Activated CD4-positive, alpha-beta T cell treated with anti-CD3 and anti-CD28 coated beads for 36 hours (primary cell): ENCODE measurements at regions of chr2 and their contacts with region 1.

Region 1: GRCh38 chr2:196171248-196171871 is at the start of gene STK17B:
- DNase-seq: peak; percentile 99
- ATAC-seq: peak; percentile 76
- H3K4me3 Mint-ChIP-seq: peak within 1 kb of the TSS; percentile 92
- H3K27ac Mint-ChIP-seq: peak within 1 kb of the TSS; percentile 98
- H3K4me1 Mint-ChIP-seq: peaks cover 38% of the 10 kb centered on the region
- H3K27me3 Mint-ChIP-seq: no peaks in the 10 kb centered on the region
- total RNA-seq, gene STK17B: 159 to 178 TPM

Region 2: GRCh38 chr2:195533771-195534642 is 637.4 kb before region 1 on chr2:
- CTCF ChIA-PET with region 1: no interaction called
- POLR2A ChIA-PET with region 1: no interaction called
- intact Hi-C with region 1: loop called (anchors 10 kb)
- DNase-seq: peak; percentile 86
- ATAC-seq: peak; percentile 75
- H3K4me3 Mint-ChIP-seq: peak overlapping the region; percentile 78
- H3K27ac Mint-ChIP-seq: peak overlapping the region; percentile 100
- H3K4me1 Mint-ChIP-seq: peaks cover 82% of the 10 kb centered on the region
- H3K27me3 Mint-ChIP-seq: no peaks in the 10 kb centered on the region

Region 3: DNA sequence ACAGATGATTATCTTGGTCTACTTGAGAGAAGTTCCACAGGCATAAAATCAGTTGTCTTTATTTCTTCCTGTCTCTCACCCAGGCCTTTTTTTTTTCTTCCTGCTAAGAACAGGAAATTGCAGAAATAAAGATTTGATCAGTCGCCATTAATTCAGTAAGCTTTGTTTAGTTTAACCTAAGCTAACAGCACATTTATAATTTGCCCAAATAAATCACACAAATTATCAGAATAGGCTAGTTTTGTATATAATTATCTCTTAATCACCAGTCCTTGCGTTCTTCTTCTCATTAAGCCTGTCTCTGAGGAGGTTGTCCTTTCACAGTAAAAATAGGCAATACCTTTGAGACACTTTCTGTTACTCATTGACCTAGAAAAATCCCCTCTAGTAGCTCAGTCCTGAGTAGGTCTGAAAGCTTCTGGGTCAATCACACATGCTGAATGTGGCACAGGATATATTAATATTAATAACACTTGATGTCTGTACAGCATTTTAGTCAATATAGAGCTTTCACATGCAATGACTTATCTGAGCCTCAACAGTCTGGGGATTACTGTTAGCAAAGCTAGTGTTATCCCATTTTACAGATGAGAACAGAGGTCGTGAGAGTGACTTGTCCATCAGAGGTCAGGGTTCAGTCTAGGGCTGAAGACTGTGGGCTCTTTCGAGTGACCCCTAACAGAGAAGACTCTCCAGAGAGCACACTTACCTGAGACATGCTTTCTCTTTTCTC is 11.2 kb after region 1 on chr2:
- CTCF ChIA-PET with region 1: interaction called, 5 read pairs
- POLR2A ChIA-PET with region 1: interaction called, 10 read pairs
- intact Hi-C with region 1: no loop called
- DNase-seq: no peak
- ATAC-seq: peak; percentile 63
- H3K4me3 Mint-ChIP-seq: peak overlapping the region; percentile 53
- H3K27ac Mint-ChIP-seq: peak overlapping the region; percentile 95
- H3K4me1 Mint-ChIP-seq: peaks cover 74% of the 10 kb centered on the region
- H3K27me3 Mint-ChIP-seq: no peaks in the 10 kb centered on the region

Region 4: GRCh38 chr2:196205881-196206435 is 34.6 kb after region 1 on chr2:
- CTCF ChIA-PET with region 1: interaction called, 10 read pairs
- POLR2A ChIA-PET with region 1: interaction called, 4 read pairs
- intact Hi-C with region 1: loop called (anchors 1 kb)
- DNase-seq: no peak
- ATAC-seq: no peak
- H3K4me3 Mint-ChIP-seq: no peak overlapping the region
- H3K27ac Mint-ChIP-seq: peak overlapping the region; percentile 35
- H3K4me1 Mint-ChIP-seq: peaks cover 45% of the 10 kb centered on the region
- H3K27me3 Mint-ChIP-seq: no peaks in the 10 kb centered on the region

Region 5: DNA sequence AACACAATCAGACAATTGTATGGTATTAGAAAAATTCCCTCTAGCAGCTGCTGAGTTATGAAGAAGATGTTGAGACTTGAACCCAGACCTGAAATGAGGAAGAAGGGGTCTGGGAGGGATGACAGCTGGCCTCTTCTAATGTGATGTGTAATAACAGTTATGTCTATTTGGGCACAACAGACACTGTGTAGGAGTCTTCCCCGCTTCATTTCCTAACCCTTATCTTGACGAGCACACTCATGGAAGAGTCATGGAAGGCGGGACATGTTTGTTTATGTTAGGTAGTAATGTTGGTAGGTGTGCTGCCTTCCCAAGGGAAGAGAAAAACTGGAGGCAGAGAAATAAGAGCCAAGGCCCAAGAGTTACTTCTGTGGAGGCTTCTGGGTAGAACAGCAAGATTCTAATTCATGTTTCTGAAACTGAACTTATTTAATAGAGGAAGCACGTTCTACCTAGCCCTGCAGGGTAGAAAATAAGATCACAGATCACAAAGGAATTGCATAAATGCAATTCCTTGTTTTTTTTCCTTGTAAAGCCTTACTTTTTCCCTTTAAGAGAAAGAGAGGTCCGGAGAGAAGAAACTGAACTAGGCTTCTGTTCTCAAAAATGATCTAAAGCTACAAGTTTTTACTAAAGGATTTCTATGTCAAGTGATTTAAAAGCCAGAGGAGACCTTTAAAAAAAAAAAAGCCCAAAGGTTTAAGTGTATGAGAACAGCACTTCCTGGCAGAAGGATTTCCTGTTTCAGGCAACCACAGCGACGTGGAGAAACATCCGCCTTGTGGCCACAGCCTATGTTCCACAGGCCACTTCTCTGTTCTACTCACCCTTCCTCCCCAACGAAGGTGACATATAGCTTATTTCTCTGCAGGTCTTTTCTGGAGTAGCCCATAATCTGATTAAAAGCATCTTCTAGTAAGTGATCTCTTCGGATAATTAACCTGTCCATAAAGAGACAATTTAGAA is 68.5 kb after region 1 on chr2:
- CTCF ChIA-PET with region 1: interaction called, 5 read pairs
- POLR2A ChIA-PET with region 1: interaction called, 3 read pairs
- intact Hi-C with region 1: loop called (anchors 1 kb)
- DNase-seq: peak; percentile 91
- ATAC-seq: peak; percentile 58
- H3K4me3 Mint-ChIP-seq: peak overlapping the region; percentile 46
- H3K27ac Mint-ChIP-seq: peak overlapping the region; percentile 97
- H3K4me1 Mint-ChIP-seq: peaks cover 91% of the 10 kb centered on the region
- H3K27me3 Mint-ChIP-seq: no peaks in the 10 kb centered on the region

Region 6: GRCh38 chr2:197209742-197210408 is 1038.5 kb after region 1 on chr2:
- CTCF ChIA-PET with region 1: no interaction called
- POLR2A ChIA-PET with region 1: no interaction called
- intact Hi-C with region 1: loop called in 1 of 2 experiments (anchors 10 kb)
- DNase-seq: peak; percentile 82
- ATAC-seq: peak; percentile 64
- H3K4me3 Mint-ChIP-seq: peak overlapping the region; percentile 30
- H3K27ac Mint-ChIP-seq: peak overlapping the region; percentile 99
- H3K4me1 Mint-ChIP-seq: peaks cover 98% of the 10 kb centered on the region
- H3K27me3 Mint-ChIP-seq: no peaks in the 10 kb centered on the region